Heart right ventricle (tissue), 16 donors: ENCODE measurements at regions of chr1 and their contacts with region 1.

Region 1: GRCh38 chr1:19485362-19486187 is at the start of gene CAPZB:
- DNase-seq: peak; percentile 96 to 97
- ATAC-seq: peak; percentile 88 to 94 (median 93)
- H3K4me3 ChIP-seq: peak within 1 kb of the TSS; percentile 79 to 100 (median 100)
- H3K27ac ChIP-seq: peak within 1 kb of the TSS; percentile 94 to 100 (median 100)
- H3K4me1 ChIP-seq: peaks cover 29 to 64% (median 60%) of the 10 kb centered on the region in 9 donors
- H3K27me3 ChIP-seq: no peaks in the 10 kb centered on the region
- CTCF ChIP-seq: no peak
- total RNA-seq, gene CAPZB: 207 to 307 (median 228) TPM

Region 2: DNA sequence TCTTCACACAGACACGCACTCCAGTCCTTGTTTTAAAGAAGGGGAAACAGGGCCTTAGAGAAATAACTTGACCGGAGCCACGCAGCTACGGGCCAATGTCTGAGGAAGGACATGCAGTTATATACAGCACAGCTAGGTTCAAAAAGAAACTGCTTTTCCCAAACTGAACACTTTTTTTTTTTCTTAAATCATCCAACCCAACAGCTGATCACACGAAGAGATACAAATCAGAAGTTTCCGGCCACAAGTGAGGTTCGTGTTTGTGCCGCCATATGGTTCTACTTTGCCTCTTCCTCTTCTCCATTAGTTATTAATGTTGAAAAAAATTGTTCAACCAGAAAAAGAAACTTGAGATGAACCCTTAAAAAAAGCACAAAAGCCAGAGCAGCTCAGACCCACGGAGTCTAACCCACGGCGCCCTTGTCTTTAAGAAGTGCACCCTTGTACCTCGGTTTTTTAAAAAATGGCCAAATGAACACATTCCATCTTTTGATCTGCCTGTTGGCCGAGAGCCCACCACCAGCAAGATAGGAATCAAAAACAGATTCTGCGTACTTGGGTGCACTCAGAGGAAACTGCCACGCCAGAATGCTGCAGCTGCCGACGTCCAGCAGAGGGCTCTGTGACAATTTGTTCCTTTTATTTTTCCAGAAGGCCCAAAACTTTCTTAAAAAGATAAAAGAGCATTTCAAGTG is 94.5 kb before region 1 on chr1:
- intact Hi-C with region 1: loop called in 5 of 10 experiments (anchors 1 to 5 kb)
- DNase-seq: peak; percentile 53 to 73
- ATAC-seq: peak in 7 of 8 donors; percentile 30 to 66 (median 58)
- H3K4me3 ChIP-seq: peak overlapping the region in 6 of 10 donors; percentile 22 to 39 (median 26)
- H3K27ac ChIP-seq: peak overlapping the region; percentile 2 to 87 (median 70)
- H3K4me1 ChIP-seq: peaks cover 16 to 87% (median 59%) of the 10 kb centered on the region in 9 donors
- H3K27me3 ChIP-seq: no peaks in the 10 kb centered on the region
- CTCF ChIP-seq: peak; percentile 56 to 94 (median 78)

Region 3: DNA sequence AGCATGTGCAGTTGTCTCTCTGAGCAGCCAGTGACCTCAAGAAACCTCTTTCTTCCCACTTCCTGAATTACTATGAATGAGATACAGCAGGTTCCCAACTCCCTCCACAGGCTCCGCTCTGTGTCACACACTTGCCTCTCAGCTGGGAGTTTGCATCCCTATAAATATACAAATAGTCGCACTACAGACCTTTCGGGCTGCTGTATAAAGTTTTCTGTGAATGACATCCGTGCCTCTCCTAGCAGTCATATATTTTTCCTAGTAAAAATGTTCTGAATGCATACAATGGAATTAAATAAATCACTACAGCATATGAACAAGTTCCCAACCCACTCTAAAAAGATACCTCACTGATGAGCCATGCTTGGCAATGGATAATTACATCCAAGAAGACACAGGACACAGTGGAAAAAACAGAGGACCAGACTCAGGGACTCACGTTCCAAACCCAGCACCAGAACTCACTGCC is 67.0 kb before region 1 on chr1:
- intact Hi-C with region 1: no loop called
- DNase-seq: no peak
- ATAC-seq: peak in 2 of 8 donors; percentile 29 to 34
- H3K4me3 ChIP-seq: no peak overlapping the region
- H3K27ac ChIP-seq: peak overlapping the region in 6 of 10 donors; percentile 11 to 85 (median 40)
- H3K4me1 ChIP-seq: peaks cover 16 to 99% (median 82%) of the 10 kb centered on the region in 9 donors
- H3K27me3 ChIP-seq: no peaks in the 10 kb centered on the region
- CTCF ChIP-seq: no peak

Region 4: GRCh38 chr1:19439464-19440171 is 46.0 kb before region 1 on chr1:
- intact Hi-C with region 1: loop called in 3 of 10 experiments (anchors 1 to 10 kb)
- DNase-seq: peak in 1 of 2 donors; percentile 50
- ATAC-seq: peak in 7 of 8 donors; percentile 10 to 80 (median 40)
- H3K4me3 ChIP-seq: no peak overlapping the region
- H3K27ac ChIP-seq: peak overlapping the region; percentile 75 to 93 (median 84)
- H3K4me1 ChIP-seq: peaks cover 44 to 100% (median 98%) of the 10 kb centered on the region in 9 donors
- H3K27me3 ChIP-seq: no peaks in the 10 kb centered on the region
- CTCF ChIP-seq: peak in 8 of 9 donors; percentile 9 to 58 (median 42)

Region 5: DNA sequence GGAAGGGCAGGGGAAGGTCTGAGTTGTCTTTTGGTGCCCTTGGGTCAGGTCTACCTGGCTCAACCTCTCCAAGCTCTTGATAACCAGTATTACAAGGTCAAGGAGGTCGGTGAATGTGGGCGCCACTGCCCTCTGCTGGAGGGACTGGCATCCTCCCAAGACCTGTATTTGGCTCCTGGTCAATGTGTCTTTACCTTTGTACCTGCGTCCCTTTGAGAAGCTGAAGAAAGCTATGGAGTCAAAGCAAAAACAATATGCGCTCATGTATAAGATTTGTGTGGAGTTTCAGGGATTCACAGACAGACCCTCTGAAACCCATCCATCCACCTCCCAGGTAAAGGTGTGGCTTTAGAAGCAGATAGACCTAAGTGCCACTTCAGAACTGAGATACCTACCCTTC is 96.7 kb after region 1 on chr1:
- intact Hi-C with region 1: loop called in 4 of 10 experiments (anchors 5 to 10 kb)
- DNase-seq: peak; percentile 40 to 61
- ATAC-seq: peak in 6 of 8 donors; percentile 27 to 63 (median 55)
- H3K4me3 ChIP-seq: no peak overlapping the region
- H3K27ac ChIP-seq: no peak overlapping the region
- H3K4me1 ChIP-seq: peaks cover 0 to 24% (median 0%) of the 10 kb centered on the region in 9 donors
- H3K27me3 ChIP-seq: no peaks in the 10 kb centered on the region
- CTCF ChIP-seq: peak; percentile 35 to 78 (median 57)

Region 6: GRCh38 chr1:19643602-19644394 is 158.2 kb after region 1 on chr1 and contains the start of gene NBL1:
- intact Hi-C with region 1: loop called in 8 of 10 experiments (anchors 5 to 10 kb)
- DNase-seq: peak; percentile 83 to 84
- ATAC-seq: peak; percentile 60 to 90 (median 74)
- H3K4me3 ChIP-seq: peak within 1 kb of the TSS; percentile 44 to 88 (median 72)
- H3K27ac ChIP-seq: peak within 1 kb of the TSS; percentile 78 to 96 (median 92)
- H3K4me1 ChIP-seq: peaks cover 5 to 58% (median 41%) of the 10 kb centered on the region in 9 donors
- H3K27me3 ChIP-seq: peaks cover 0 to 42% (median 0%) of the 10 kb centered on the region in 7 donors
- CTCF ChIP-seq: no peak
- total RNA-seq, gene NBL1: 18.5 to 48.7 (median 35.1) TPM

Region 7: DNA sequence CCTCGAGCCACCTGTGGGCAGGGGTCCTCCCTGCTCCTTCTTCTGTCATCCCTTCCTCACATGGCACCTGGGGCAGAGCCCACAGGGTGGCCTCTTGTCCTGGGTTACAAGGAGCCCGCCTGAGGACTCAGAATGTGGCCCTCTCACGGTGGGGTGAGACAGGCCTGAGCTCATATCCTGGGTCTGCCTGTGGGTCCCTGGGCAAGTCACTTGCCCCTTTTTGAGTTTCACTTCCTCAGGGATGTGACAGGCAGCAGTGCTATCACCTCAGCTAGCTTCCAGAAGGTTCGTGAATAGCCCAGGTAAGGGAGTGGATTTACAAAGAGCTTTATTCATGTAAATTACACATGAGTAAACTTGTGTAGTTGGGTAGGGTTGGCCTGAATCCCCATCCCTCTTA is 212.6 kb after region 1 on chr1:
- intact Hi-C with region 1: no loop called
- DNase-seq: no peak
- ATAC-seq: no peak
- H3K4me3 ChIP-seq: no peak overlapping the region
- H3K27ac ChIP-seq: no peak overlapping the region
- H3K4me1 ChIP-seq: no peaks in the 10 kb centered on the region
- H3K27me3 ChIP-seq: no peaks in the 10 kb centered on the region
- CTCF ChIP-seq: no peak